ENCODE measurements at regions of chr19 and their contacts with region 1.

Region 1: DNA sequence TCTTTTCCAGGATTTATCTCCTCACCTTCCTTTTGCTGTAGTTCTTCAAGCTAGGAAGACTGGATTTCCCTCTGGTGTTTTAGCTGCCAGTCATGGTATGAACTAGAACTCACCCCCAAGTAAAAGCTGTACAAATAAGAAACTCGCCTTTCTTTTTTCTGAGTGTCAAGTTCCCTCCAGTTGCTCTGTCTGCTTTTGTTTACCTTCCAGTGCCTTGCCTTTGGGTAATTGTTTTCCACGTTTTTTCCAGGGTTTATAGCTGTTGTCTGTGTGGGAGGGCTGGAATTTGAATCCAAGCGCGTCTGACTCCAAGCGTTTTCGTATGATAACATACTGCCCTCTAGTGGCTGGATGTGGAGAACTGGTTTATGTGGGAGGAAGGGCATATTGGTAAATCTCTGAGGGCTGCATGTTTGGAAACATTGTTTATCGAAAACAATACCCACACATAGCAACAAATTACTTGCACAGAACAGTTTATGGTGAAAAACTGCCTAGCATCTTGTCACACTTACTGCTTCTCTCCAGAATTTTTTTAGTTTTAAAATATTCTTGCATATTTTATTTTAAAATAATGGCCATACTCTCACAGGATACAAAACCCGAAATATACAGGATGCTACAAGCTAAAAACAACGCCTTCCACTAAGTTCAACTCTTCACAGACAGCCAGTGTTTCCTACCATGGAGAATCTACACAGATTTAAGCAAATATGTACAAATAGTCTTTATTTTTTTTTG is 19.2 kb downstream of the RCN3 start:
- DNase-seq: peak; percentile 72
- H3K4me3 ChIP-seq: no peak overlapping the region
- H3K27ac ChIP-seq: no peak overlapping the region
- H3K4me1 ChIP-seq: no peaks in the 10 kb centered on the region
- H3K27me3 ChIP-seq: no peaks in the 10 kb centered on the region
- CTCF ChIP-seq: peak; percentile 81 to 85

Region 2: GRCh38 chr19:49473868-49474544 is 73.0 kb before region 1 on chr19 and contains the start of gene FLT3LG:
- CTCF ChIA-PET with region 1: no interaction called
- dilution Hi-C with region 1: no loop called
- in situ Hi-C with region 1: no loop called
- intact Hi-C with region 1: loop called (anchors 1 kb)
- DNase-seq: peak; percentile 55
- H3K4me3 ChIP-seq: peak within 1 kb of the TSS; percentile 63 to 76 (median 72)
- H3K27ac ChIP-seq: no peak within 1 kb of the TSS
- H3K4me1 ChIP-seq: peaks cover 8% of the 10 kb centered on the region
- H3K27me3 ChIP-seq: no peaks in the 10 kb centered on the region
- CTCF ChIP-seq: peak; percentile 78 to 98
- total RNA-seq, gene FLT3LG: 0.50 to 4.2 TPM

Region 3: GRCh38 chr19:49502866-49503581 is 44.0 kb before region 1 on chr19:
- CTCF ChIA-PET with region 1: interaction called, 4 read pairs
- dilution Hi-C with region 1: no loop called
- in situ Hi-C with region 1: loop called in 1 of 2 experiments (anchors 5 kb)
- intact Hi-C with region 1: loop called (anchors 1 kb)
- DNase-seq: peak; percentile 48
- H3K4me3 ChIP-seq: no peak overlapping the region
- H3K27ac ChIP-seq: no peak overlapping the region
- H3K4me1 ChIP-seq: peaks cover 4% of the 10 kb centered on the region
- H3K27me3 ChIP-seq: no peaks in the 10 kb centered on the region
- CTCF ChIP-seq: peak; percentile 30 to 59

Region 4: GRCh38 chr19:49533551-49534488 is 13.2 kb before region 1 on chr19:
- CTCF ChIA-PET with region 1: no interaction called
- dilution Hi-C with region 1: no loop called
- in situ Hi-C with region 1: no loop called
- intact Hi-C with region 1: no loop called
- DNase-seq: peak; percentile 67
- H3K4me3 ChIP-seq: peak overlapping the region; percentile 62 to 71 (median 65)
- H3K27ac ChIP-seq: no peak overlapping the region
- H3K4me1 ChIP-seq: peaks cover 12% of the 10 kb centered on the region
- H3K27me3 ChIP-seq: no peaks in the 10 kb centered on the region
- CTCF ChIP-seq: peak; percentile 14 to 43

Region 5: DNA sequence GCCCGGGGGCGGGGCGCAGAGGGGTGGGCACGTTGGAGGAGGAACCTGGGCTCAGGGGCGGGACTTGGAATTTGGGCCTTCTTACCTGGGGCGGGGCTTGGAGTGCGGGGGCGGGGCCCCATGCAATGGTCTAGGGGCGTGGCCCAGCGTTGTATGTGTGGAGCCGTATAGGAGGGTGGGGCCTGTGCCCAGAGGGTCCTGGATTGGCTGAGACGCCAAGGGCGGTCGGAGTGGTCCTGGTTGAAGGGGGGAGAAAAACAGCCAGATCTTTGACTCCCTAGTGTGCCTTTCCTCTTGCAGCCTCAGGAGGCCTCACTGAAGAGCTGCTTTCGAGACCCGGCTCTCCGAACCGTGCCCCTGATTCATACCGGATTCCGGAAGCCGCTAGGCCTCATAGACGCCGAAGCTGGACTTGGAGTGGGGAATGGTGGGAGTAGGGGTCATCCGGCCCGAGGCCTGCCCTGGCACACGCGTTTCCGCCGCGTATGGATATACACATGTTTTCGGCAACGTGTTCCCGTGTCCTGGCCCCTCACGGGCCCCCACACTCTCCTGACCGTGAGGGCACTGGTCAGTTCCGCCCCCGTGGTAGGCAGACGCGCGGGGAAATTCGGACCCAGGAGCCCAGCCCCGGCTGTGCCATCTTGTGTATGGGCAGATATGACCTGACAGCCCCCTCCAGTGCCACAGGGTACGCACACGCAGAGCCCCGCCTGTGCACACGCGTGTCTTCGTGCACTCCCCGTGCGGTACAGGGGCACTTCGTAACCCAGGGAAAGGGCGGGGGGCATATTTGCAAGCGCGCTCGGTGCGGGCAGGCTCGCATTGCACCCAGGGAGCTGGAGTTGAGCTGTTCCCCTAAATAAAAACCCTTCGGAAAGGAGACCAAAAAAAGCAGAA is 43.3 kb after region 1 on chr19:
- CTCF ChIA-PET with region 1: no interaction called
- dilution Hi-C with region 1: no loop called
- in situ Hi-C with region 1: no loop called
- intact Hi-C with region 1: no loop called
- DNase-seq: peak; percentile 93
- H3K4me3 ChIP-seq: peak overlapping the region; percentile 42 to 78 (median 60)
- H3K27ac ChIP-seq: peak overlapping the region; percentile 63
- H3K4me1 ChIP-seq: peaks cover 13% of the 10 kb centered on the region
- H3K27me3 ChIP-seq: no peaks in the 10 kb centered on the region
- CTCF ChIP-seq: no peak